PC-3 (cell line): ENCODE measurements at regions of chr3 and their contacts with region 1.

Region 1: GRCh38 chr3:49906004-49906743 is 2.5 kb upstream of the MST1R start:
- DNase-seq: peak; percentile 86
- ATAC-seq: peak; percentile 61
- H3K4me3 ChIP-seq: peak overlapping the region; percentile 58
- H3K27ac ChIP-seq: peak overlapping the region; percentile 99
- H3K4me1 ChIP-seq: peaks cover 52% of the 10 kb centered on the region
- H3K27me3 ChIP-seq: no peaks in the 10 kb centered on the region
- CTCF ChIP-seq: peak; percentile 98

Region 2: DNA sequence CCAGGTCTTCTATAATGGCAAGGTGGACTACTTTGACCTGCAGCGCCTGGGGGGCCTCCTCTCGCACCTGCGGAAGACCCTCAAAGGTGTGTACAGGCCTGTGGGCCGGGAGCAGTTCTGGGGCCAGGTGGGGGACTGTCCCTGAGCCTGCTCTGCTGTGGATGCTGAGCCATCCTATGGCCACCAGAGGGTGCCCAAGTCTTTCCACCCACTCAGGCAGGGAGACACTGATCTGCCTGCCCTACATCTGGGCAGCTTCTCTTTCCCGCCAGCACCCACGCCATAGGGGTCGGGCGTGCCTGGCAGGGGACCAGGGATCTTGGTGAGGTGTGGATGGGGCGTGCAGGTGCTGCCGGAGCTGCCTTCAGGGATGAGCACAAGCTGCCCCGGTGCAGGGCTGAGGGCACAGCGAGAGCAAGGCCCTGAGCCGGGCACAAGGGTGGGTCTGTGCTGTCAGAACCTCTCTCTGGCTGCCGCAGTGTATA is 202.7 kb before region 1 on chr3:
- CTCF ChIA-PET with region 1: no interaction called
- POLR2A ChIA-PET with region 1: no interaction called
- intact Hi-C with region 1: loop called (anchors 1 kb)
- DNase-seq: peak; percentile 81
- ATAC-seq: peak; percentile 88
- H3K4me3 ChIP-seq: no peak overlapping the region
- H3K27ac ChIP-seq: no peak overlapping the region
- H3K4me1 ChIP-seq: no peaks in the 10 kb centered on the region
- H3K27me3 ChIP-seq: no peaks in the 10 kb centered on the region
- CTCF ChIP-seq: peak; percentile 85

Region 3: GRCh38 chr3:49786241-49786958 is 119.8 kb before region 1 on chr3 and contains the start of gene IP6K1:
- CTCF ChIA-PET with region 1: no interaction called
- POLR2A ChIA-PET with region 1: interaction called, 6 read pairs
- intact Hi-C with region 1: loop called (anchors 5 kb)
- DNase-seq: peak; percentile 100
- ATAC-seq: peak; percentile 99
- H3K4me3 ChIP-seq: peak within 1 kb of the TSS; percentile 87
- H3K27ac ChIP-seq: peak within 1 kb of the TSS; percentile 50
- H3K4me1 ChIP-seq: peaks cover 14% of the 10 kb centered on the region
- H3K27me3 ChIP-seq: no peaks in the 10 kb centered on the region
- CTCF ChIP-seq: no peak
- total RNA-seq, gene IP6K1: 50.3 and 51.0 TPM in 2 replicates

Region 4: GRCh38 chr3:49802719-49803464 is 103.3 kb before region 1 on chr3 and contains the start of gene INKA1:
- CTCF ChIA-PET with region 1: interaction called, 18 read pairs
- POLR2A ChIA-PET with region 1: interaction called, 10 read pairs
- intact Hi-C with region 1: loop called (anchors 1 kb)
- DNase-seq: peak; percentile 89
- ATAC-seq: peak; percentile 79
- H3K4me3 ChIP-seq: peak within 1 kb of the TSS; percentile 76
- H3K27ac ChIP-seq: no peak within 1 kb of the TSS
- H3K4me1 ChIP-seq: peaks cover 23% of the 10 kb centered on the region
- H3K27me3 ChIP-seq: no peaks in the 10 kb centered on the region
- CTCF ChIP-seq: peak; percentile 87
- total RNA-seq, gene INKA1: 1.3 and 5.8 TPM in 2 replicates

Region 5: DNA sequence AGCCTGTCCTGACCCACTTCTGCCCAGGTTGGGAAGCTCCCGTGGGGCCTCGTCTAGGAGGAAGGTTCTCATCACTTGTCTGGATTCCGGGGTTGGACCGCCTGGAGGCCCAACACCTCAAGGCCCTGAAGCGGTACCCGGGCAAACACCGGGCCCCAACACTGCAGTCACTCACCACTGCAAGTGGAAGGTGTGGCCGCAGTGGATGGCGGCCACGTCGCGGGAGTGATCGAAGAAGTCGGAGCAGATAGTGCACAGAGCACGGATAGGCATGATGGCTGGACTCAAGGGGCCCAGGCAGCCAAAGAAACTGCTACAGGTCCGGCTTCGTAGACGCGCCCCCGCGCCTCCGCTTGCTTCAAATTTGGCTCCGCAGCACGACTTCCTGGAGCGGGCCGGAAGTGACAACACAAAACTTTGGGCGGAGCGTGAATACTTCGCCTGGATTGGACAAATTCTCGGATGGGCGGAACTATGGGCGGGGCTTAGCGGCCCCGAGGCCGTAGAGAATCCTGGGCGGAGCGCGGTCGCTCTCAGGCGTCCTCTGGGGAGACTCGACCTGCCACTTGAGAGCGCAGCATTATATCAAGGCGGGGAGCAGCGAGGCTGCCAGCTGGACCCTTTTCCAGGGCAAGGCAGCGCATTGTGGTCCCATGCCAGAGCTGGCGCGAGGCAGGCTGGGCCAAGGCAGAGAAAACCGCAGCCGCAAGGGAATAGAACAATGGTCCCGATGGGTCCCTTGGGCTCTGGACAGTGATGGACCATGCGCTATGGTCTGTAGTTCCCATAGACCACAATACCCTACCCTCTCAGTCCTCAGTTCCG is 49.8 kb before region 1 on chr3 and contains the start of gene TRAIP:
- CTCF ChIA-PET with region 1: no interaction called
- POLR2A ChIA-PET with region 1: no interaction called
- intact Hi-C with region 1: loop called (anchors 2 kb)
- DNase-seq: peak; percentile 98
- ATAC-seq: peak; percentile 99
- H3K4me3 ChIP-seq: peak within 1 kb of the TSS; percentile 91
- H3K27ac ChIP-seq: 0 out of 2 replicates have a peak within 1 kb of the TSS, but pooled peaks have one; percentile 11
- H3K4me1 ChIP-seq: peaks cover 10% of the 10 kb centered on the region; the same call in 1 of the 2 replicates
- H3K27me3 ChIP-seq: no peaks in the 10 kb centered on the region
- CTCF ChIP-seq: no peak
- total RNA-seq, gene TRAIP: 21.6 and 27.8 TPM in 2 replicates

Region 6: DNA sequence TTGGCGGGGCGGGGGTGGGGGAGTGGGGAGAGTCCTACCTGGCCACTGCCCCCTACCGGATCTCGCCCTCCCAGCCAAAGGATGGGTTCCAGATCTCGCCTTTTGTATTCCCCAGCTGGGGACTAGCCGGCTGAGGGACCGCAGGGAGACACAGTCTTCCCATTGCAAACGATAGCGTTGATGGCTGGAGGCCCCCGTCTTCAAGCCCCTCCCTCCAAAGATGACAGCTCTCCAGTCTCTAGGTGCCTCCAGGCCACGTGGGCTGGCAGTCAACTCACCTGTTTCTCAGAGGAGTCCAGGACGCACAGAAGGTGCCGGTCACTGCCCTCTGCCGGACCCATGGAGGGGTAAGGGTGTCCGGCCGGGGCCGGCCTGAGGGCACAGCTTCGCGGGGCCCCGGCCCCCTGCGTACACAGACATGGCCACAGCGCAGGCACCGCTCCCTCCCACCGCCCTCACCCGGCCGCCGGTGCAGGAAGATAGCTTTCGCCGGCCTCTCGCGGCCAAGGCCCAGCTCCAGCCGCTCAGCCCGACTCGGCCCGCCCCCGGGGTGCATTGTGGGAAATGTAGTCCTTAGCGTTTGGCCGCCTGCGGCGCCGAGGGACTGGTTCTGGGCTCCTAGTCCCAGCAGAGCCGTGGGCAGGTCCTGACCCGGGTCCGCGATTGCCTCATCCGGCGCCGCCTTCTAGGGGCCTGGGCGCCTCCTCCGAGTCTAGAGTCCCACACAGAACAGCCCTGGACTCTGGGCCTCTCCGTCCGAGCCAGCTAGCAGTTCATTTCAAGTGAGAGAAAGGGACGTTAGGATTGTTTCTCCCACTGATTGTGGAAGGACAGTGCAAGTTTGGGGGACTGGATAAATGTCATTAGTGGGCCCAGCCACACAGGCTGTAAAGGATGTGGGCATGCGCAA is 23.4 kb after region 1 on chr3 and contains the start of gene MON1A:
- CTCF ChIA-PET with region 1: interaction called, 6 read pairs
- POLR2A ChIA-PET with region 1: interaction called, 6 read pairs
- intact Hi-C with region 1: loop called (anchors 2 kb)
- DNase-seq: peak; percentile 94
- ATAC-seq: peak; percentile 94
- H3K4me3 ChIP-seq: peak within 1 kb of the TSS; percentile 94
- H3K27ac ChIP-seq: peak within 1 kb of the TSS; percentile 53
- H3K4me1 ChIP-seq: peaks cover 34% of the 10 kb centered on the region
- H3K27me3 ChIP-seq: no peaks in the 10 kb centered on the region
- CTCF ChIP-seq: peak; percentile 46; the same call in 1 of the 2 replicates
- total RNA-seq, gene MON1A: 20.8 and 24.9 TPM in 2 replicates